Ascending aorta (tissue), 2 donors: ENCODE measurements at regions of chrX and their contacts with region 1.

Region 1: GRCh38 chrX:2500267-2501075 is at the starts of genes DHRSX and ZBED1:
- DNase-seq: no peak
- H3K4me3 ChIP-seq: peak within 1 kb of the TSS; percentile 84 to 99
- H3K27ac ChIP-seq: peak within 1 kb of the TSS; percentile 77 to 91
- H3K4me1 ChIP-seq: peaks cover 7 to 24% of the 10 kb centered on the region in 2 donors
- H3K27me3 ChIP-seq: no peaks in the 10 kb centered on the region
- CTCF ChIP-seq: no peak
- total RNA-seq, gene DHRSX: 13.4 TPM
- total RNA-seq, gene ZBED1: 34.6 TPM

Region 2: DNA sequence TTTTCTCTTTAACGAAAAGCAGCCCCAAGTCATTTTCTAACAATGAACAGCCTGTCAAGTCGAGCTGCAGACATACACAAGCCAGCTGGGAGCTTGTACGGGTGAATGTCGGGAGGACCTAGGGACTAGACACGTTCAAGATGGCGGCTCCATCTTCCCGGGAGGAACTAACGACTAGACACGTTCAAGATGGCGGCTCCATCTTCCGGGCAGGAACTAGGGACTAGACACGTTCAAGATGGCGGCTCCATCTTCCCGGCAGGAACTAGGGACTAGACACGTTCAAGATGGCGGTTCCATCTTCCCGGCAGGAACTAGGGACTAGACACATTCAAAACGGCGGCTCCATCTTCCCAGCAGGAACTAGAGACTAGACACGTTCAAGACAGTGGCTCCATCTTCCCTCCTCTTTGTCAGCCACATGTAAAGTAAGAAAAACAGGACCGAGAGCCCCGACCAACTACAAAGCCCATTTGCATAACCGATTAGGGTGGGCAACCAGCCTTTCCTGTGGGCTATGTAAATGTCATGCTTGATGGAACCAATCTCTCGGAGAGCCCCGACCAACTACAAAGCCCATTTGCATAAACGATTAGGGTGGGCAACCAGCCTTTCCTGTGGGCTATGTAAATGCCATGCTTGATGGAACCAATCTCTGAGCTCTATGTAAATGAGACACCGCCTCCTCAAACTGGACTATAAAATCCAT is 175.2 kb before region 1 on chrX:
- intact Hi-C with region 1: loop called (anchors 5 kb)
- DNase-seq: peak; percentile 46 to 90
- H3K4me3 ChIP-seq: peak overlapping the region; percentile 61 to 67
- H3K27ac ChIP-seq: peak overlapping the region; percentile 71 to 78
- H3K4me1 ChIP-seq: no peaks in the 10 kb centered on the region
- H3K27me3 ChIP-seq: no peaks in the 10 kb centered on the region
- CTCF ChIP-seq: no peak

Region 3: DNA sequence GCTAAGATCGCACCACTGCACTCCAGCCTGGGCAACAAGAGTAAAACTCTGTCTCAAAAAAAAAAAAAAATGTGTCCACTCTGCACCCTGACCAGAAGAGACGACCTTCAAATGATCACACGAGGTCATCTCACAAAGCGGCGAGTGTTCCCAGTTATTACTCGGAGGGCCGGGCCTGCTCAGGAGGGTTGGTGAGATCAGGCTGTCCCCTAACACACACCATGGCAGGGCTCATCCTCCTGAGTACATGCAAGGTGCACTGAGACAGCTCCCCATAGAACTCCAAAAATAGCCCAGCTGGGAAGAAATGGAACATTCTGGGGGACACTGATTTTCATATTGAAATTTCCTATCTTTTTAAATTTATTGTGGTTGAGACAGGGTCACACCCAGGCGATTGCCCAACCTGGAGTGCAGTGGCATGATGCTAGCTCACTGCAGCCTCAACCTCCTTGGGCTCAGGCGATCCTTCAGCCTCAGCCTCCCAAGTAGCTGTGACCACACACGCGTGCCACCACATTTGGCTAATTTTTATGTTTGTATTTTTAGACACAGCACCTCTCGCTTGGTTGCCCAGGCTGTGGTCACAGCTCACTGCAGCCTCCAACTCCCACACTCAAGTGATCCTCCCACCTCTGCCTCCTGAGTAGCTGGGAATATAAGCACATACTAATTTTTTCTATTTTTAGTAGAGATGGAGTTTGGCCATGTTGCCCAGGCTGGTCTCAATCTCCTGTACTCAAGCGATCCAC is 51.2 kb before region 1 on chrX:
- intact Hi-C with region 1: no loop called
- DNase-seq: no peak
- H3K4me3 ChIP-seq: no peak overlapping the region
- H3K27ac ChIP-seq: no peak overlapping the region
- H3K4me1 ChIP-seq: no peaks in the 10 kb centered on the region
- H3K27me3 ChIP-seq: no peaks in the 10 kb centered on the region
- CTCF ChIP-seq: no peak

Region 4: GRCh38 chrX:2589186-2590030 is 88.9 kb after region 1 on chrX:
- intact Hi-C with region 1: loop called (anchors 5 kb)
- DNase-seq: no peak
- H3K4me3 ChIP-seq: no peak overlapping the region
- H3K27ac ChIP-seq: no peak overlapping the region
- H3K4me1 ChIP-seq: no peaks in the 10 kb centered on the region
- H3K27me3 ChIP-seq: no peaks in the 10 kb centered on the region
- CTCF ChIP-seq: no peak